OCI-LY7 (cell line): ENCODE measurements at regions of chr1 and their contacts with region 1.

Region 1: GRCh38 chr1:159197561-159198557 is 6.8 kb upstream of the ACKR1 start:
- DNase-seq: peak; percentile 68
- H3K4me3 ChIP-seq: no peak overlapping the region
- H3K27ac ChIP-seq: no peak overlapping the region
- H3K4me1 ChIP-seq: no peaks in the 10 kb centered on the region
- CTCF ChIP-seq: peak; percentile 85

Region 2: DNA sequence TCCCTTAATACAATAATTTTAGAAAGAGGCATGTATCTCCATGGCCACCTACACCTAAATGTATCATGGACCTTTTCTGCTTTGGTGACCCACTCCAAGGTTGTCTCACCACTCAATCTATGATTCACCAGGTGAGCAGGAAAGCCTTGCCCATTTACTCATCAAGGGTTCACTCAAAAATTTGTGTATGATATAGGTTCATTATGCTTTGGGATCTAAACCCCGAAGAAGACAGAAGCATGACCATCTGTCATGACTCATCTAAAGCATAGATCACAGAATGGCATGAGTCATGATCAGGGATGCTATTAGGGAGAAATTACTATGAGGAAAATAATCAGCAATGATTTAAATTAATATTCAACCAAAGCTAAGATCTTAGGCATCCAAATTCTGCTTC is 228.0 kb before region 1 on chr1:
- CTCF ChIA-PET with region 1: no interaction called
- POLR2A ChIA-PET with region 1: no interaction called
- intact Hi-C with region 1: no loop called
- DNase-seq: no peak
- H3K4me3 ChIP-seq: no peak overlapping the region
- H3K27ac ChIP-seq: no peak overlapping the region
- H3K4me1 ChIP-seq: no peaks in the 10 kb centered on the region
- CTCF ChIP-seq: no peak

Region 3: GRCh38 chr1:159067699-159068621 is 129.9 kb before region 1 on chr1:
- CTCF ChIA-PET with region 1: no interaction called
- POLR2A ChIA-PET with region 1: no interaction called
- intact Hi-C with region 1: no loop called
- DNase-seq: peak; percentile 97
- H3K4me3 ChIP-seq: peak overlapping the region; percentile 57
- H3K27ac ChIP-seq: peak overlapping the region; percentile 99
- H3K4me1 ChIP-seq: peaks cover 79% of the 10 kb centered on the region
- CTCF ChIP-seq: no peak

Region 4: GRCh38 chr1:159132271-159132881 is 65.5 kb before region 1 on chr1:
- CTCF ChIA-PET with region 1: no interaction called
- POLR2A ChIA-PET with region 1: no interaction called
- intact Hi-C with region 1: loop called (anchors 5 kb)
- DNase-seq: peak; percentile 62
- H3K4me3 ChIP-seq: no peak overlapping the region
- H3K27ac ChIP-seq: no peak overlapping the region
- H3K4me1 ChIP-seq: no peaks in the 10 kb centered on the region
- CTCF ChIP-seq: peak; percentile 95

Region 5: DNA sequence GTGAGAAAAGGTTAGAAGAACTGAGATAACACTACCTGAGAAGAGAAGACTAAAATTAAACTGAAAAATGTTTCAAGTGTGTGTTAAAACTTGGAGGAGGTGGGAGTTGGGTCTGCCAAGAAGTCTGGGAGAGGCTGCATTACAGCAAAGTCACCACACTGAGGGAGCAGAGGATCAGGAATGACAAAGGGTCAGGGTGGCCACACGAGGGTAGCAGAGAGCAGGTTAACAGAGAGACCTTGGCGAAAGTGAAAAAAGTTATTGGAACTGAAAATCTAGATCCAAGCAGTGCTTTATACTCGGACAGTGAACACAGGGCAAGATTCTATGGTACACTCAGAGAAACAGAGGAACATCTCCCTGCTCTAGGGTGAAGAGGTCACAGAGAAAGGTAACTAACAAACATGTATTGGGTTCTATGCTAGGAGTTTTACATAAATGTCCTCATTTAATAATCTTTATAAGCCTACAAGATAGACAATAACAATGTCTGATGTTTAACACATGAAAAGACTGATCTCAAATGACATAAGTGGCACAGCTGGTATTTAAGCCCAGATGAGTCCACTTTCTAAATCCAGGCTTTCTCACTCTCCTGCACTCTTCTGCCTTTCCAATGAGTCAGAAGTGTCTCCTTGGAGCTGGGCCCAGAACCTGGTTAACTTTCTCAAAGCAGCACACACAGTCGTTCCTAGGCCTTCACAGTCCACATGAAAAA is 36.7 kb before region 1 on chr1:
- CTCF ChIA-PET with region 1: no interaction called
- POLR2A ChIA-PET with region 1: no interaction called
- intact Hi-C with region 1: loop called (anchors 5 kb)
- DNase-seq: peak; percentile 65
- H3K4me3 ChIP-seq: no peak overlapping the region
- H3K27ac ChIP-seq: no peak overlapping the region
- H3K4me1 ChIP-seq: no peaks in the 10 kb centered on the region
- CTCF ChIP-seq: peak; percentile 97

Region 6: DNA sequence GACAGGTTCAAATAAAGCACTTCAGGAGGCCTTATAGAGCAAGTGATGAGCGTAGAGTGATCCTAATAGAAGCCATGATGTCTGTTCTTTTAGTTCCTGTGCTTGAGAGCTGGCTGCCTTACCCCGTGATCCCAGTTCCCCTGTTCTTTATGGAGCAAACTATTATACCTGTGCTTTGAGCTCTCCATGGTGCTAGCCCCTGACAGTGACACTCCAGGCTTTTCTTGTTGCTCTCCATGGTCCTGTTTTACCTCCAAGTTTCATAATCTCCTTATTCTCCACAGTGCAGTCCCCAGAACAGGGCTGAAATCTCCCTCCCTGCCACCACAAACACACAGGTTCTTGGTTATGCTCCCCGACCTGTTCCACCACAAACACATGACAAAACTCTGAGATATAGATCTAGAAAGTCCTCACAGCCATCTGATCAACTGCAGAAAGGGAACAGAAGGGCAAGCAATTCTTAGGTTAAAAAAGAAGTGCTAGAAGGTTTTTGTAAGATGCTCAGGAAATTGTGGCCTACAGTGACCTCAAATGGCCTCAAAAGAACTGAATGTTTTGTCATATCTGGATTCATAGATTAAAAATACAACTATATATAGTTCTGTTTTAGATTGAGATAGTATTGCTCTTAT is 20.5 kb before region 1 on chr1:
- CTCF ChIA-PET with region 1: no interaction called
- POLR2A ChIA-PET with region 1: no interaction called
- intact Hi-C with region 1: no loop called
- DNase-seq: peak; percentile 51
- H3K4me3 ChIP-seq: no peak overlapping the region
- H3K27ac ChIP-seq: no peak overlapping the region
- H3K4me1 ChIP-seq: no peaks in the 10 kb centered on the region
- CTCF ChIP-seq: no peak

Region 7: DNA sequence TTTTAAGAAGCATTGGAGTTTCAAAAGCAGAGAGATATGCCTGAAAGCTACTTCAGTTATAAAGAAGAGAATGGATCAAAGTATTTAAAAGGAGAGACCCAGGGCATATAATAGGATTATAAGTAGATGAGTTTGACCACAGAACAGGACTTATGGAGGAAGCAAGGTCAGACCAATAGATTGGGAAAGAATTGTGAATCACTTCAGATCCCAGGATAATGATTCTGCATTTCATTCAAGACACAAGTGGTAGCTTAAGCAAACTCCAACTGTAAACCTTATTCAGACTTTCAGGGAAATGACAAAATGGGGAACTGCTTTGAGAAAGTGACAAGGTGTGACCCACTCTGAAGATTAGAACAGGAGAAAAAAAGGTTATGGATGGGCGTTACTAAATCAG is 356.8 kb after region 1 on chr1:
- CTCF ChIA-PET with region 1: no interaction called
- POLR2A ChIA-PET with region 1: no interaction called
- intact Hi-C with region 1: no loop called
- DNase-seq: no peak
- H3K4me3 ChIP-seq: no peak overlapping the region
- H3K27ac ChIP-seq: no peak overlapping the region
- H3K4me1 ChIP-seq: no peaks in the 10 kb centered on the region
- CTCF ChIP-seq: no peak